Ovary (tissue), 10 donors: ENCODE measurements at regions of chr3 and their contacts with region 1.

Region 1: GRCh38 chr3:128693696-128694095 is 32.3 kb upstream of the RAB7A start:
- DNase-seq: no peak
- H3K4me3 ChIP-seq: no peak overlapping the region
- H3K27ac ChIP-seq: no peak overlapping the region
- H3K4me1 ChIP-seq: no peaks in the 10 kb centered on the region
- H3K27me3 ChIP-seq: no peaks in the 10 kb centered on the region
- CTCF ChIP-seq: no peak
- EP300 ChIP-seq: no peak
- POLR2A ChIP-seq: no peak

Region 2: GRCh38 chr3:128617557-128618397 is 75.9 kb before region 1 on chr3:
- intact Hi-C with region 1: no loop called
- DNase-seq: peak; percentile 97 to 99 (median 98)
- H3K4me3 ChIP-seq: peak overlapping the region; percentile 94
- H3K27ac ChIP-seq: peak overlapping the region; percentile 59 to 60
- H3K4me1 ChIP-seq: peaks cover 13% of the 10 kb centered on the region
- H3K27me3 ChIP-seq: no peaks in the 10 kb centered on the region
- CTCF ChIP-seq: peak; percentile 93 to 98 (median 94)
- EP300 ChIP-seq: no peak
- POLR2A ChIP-seq: no peak

Region 3: GRCh38 chr3:128663151-128663550 is 30.5 kb before region 1 on chr3:
- intact Hi-C with region 1: loop called in 1 of 4 experiments (anchors 2 kb)
- DNase-seq: no peak
- H3K4me3 ChIP-seq: no peak overlapping the region
- H3K27ac ChIP-seq: no peak overlapping the region
- H3K4me1 ChIP-seq: no peaks in the 10 kb centered on the region
- H3K27me3 ChIP-seq: no peaks in the 10 kb centered on the region
- CTCF ChIP-seq: no peak
- EP300 ChIP-seq: no peak
- POLR2A ChIP-seq: no peak